ENCODE measurements at regions of chr22 and their contacts with region 1.

Region 1: GRCh38 chr22:36239401-36240171 is at the start of gene APOL2:
- DNase-seq: peak; percentile 75
- ATAC-seq: peak; percentile 98
- H3K4me3 ChIP-seq: peak within 1 kb of the TSS; percentile 96
- H3K27ac ChIP-seq: peak within 1 kb of the TSS; percentile 79
- H3K4me1 ChIP-seq: peaks cover 23% of the 10 kb centered on the region
- H3K27me3 ChIP-seq: no peaks in the 10 kb centered on the region
- CTCF ChIP-seq: peak; percentile 77
- EP300 ChIP-seq: no peak; a peak in 1 of 4 replicates
- POLR2A ChIP-seq: peak; percentile 69
- RAD21 ChIP-seq: peak; percentile 47
- polyA plus RNA-seq, gene APOL2: 4.4 to 14.7 TPM

Region 2: DNA sequence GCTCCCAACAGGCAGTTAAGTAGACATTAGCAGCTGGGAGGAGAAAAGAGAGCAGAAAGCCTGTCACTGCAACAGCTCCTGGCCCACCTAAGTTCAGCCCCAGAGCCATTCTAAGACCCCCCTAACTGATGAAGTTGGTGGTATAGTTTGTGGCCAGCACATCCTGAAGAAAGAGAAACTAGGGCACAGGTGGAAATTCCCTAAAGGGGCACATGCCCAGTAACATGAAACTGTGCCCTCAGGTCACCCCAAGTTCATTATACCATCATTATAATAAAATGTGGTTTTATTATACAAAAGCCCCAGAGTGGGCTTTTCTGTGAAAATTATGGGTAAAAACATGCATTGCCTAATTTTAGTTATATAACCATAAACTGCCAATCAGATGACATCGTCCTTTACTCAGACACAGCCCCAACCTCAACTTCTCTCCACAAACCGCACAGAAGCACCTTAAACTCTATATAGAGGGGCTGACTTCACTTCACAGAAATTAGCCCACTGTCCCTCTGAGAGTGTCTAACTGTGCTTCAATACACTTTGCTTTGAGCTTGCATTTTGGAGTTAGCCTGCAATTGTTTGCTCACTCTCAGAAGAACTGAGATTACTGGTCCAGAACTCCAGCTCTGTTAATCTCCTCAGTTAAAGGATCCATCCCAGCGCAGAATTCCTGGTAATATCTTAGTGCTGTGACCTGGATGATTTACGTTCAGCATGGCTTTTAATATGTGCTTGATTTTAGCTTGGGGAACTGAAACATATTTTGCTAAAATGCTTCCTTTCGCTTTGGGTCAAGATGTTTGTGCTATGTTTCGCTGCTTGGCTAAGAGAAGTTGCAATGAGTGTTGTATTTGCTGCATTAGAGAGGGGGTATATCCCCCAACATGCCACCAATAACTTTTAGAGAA is 77.2 kb before region 1 on chr22:
- CTCF ChIA-PET with region 1: interaction called, 8 read pairs
- POLR2A ChIA-PET with region 1: no interaction called
- RAD21 ChIA-PET with region 1: interaction called, 18 read pairs
- SMC1A ChIA-PET with region 1: interaction called, 10 read pairs
- in situ Hi-C with region 1: no loop called
- intact Hi-C with region 1: no loop called
- DNase-seq: peak; percentile 70
- ATAC-seq: peak; percentile 79
- H3K4me3 ChIP-seq: peak overlapping the region; percentile 55
- H3K27ac ChIP-seq: peak overlapping the region; percentile 94
- H3K4me1 ChIP-seq: peaks cover 58% of the 10 kb centered on the region
- H3K27me3 ChIP-seq: no peaks in the 10 kb centered on the region
- CTCF ChIP-seq: no peak
- EP300 ChIP-seq: peak; percentile 13 to 37; a peak in 3 of 4 replicates
- POLR2A ChIP-seq: no peak
- RAD21 ChIP-seq: no peak

Region 3: DNA sequence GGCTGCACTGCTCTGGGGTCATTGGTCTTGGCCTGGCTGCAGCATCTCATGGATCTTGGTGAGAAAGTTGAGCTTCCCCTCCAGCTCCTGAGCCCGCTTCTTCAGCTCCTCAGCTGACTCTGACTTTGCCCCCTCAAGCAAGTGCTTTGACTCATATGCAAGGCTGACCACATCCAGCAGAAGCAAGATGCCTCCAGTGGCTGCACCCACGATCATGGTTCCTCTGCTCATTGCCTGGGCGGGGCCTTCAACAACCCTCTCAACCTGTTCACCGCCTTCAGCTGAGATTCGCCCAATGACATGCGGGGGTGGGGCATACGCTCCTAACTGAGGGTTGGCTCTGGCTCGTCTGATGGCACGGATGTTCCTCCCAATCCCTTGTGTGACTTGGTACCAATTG is 12.2 kb before region 1 on chr22:
- CTCF ChIA-PET with region 1: interaction called, 8 read pairs
- POLR2A ChIA-PET with region 1: interaction called, 3 read pairs
- RAD21 ChIA-PET with region 1: no interaction called
- SMC1A ChIA-PET with region 1: interaction called, 12 read pairs
- in situ Hi-C with region 1: no loop called
- intact Hi-C with region 1: no loop called
- DNase-seq: no peak
- ATAC-seq: no peak
- H3K4me3 ChIP-seq: no peak overlapping the region
- H3K27ac ChIP-seq: no peak overlapping the region
- H3K4me1 ChIP-seq: no peaks in the 10 kb centered on the region
- H3K27me3 ChIP-seq: no peaks in the 10 kb centered on the region
- CTCF ChIP-seq: no peak
- EP300 ChIP-seq: no peak
- POLR2A ChIP-seq: no peak
- RAD21 ChIP-seq: no peak

Region 4: DNA sequence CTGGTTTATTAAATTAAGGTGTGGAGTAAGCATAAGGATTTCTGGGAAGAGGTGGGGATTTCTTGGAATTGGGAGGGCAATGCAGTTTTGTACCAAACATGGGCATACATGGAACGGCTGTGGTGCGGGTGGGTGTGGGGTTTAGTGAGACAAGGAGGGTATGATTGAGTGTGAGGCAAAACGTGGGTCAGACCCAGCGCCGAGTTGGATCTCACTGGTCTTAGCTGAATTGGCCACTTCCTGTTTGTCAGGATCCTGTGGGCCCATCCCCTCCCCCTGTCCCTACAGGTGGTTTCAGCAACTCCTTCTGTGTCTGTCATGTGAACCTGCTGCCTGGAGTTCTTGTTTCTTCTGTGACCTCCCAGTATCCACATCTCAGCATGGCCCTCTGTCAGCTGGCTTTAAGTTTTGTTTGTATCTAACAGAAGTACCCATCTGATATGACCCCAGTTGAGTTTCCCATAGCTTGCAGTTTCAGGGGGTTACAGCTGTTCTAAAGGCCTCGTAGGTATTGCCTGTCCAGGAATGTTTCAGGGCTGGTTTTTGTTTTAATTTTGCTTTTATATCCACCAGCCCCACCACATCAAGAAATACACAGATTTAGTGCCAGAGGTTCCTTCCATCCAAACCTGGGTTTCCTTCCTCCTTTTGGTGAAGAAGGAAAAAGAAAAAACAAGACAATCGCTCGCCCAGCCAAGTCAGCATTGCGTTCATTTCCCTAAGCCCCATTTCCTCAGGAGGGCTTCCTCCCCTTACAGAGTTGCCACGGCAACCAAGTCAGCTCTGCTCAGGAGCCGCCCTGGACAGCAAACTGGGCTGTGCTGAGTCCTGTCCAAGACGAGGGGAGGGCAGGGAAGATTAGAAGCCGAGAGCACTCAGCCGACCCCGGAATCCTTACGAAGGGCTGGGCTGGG is 19.4 kb after region 1 on chr22:
- CTCF ChIA-PET with region 1: interaction called, 153 read pairs
- POLR2A ChIA-PET with region 1: interaction called, 99 read pairs
- RAD21 ChIA-PET with region 1: interaction called, 100 read pairs
- SMC1A ChIA-PET with region 1: interaction called, 165 read pairs
- in situ Hi-C with region 1: no loop called
- intact Hi-C with region 1: no loop called
- DNase-seq: no peak
- ATAC-seq: peak; percentile 85
- H3K4me3 ChIP-seq: peak overlapping the region; percentile 41; the same call in 1 of the 2 replicates
- H3K27ac ChIP-seq: peak overlapping the region; percentile 72
- H3K4me1 ChIP-seq: peaks cover 23% of the 10 kb centered on the region
- H3K27me3 ChIP-seq: no peaks in the 10 kb centered on the region
- CTCF ChIP-seq: no peak
- EP300 ChIP-seq: no peak
- POLR2A ChIP-seq: 0 out of 2 replicates have a peak, but pooled peaks have one; percentile 22
- RAD21 ChIP-seq: no peak

Region 5: DNA sequence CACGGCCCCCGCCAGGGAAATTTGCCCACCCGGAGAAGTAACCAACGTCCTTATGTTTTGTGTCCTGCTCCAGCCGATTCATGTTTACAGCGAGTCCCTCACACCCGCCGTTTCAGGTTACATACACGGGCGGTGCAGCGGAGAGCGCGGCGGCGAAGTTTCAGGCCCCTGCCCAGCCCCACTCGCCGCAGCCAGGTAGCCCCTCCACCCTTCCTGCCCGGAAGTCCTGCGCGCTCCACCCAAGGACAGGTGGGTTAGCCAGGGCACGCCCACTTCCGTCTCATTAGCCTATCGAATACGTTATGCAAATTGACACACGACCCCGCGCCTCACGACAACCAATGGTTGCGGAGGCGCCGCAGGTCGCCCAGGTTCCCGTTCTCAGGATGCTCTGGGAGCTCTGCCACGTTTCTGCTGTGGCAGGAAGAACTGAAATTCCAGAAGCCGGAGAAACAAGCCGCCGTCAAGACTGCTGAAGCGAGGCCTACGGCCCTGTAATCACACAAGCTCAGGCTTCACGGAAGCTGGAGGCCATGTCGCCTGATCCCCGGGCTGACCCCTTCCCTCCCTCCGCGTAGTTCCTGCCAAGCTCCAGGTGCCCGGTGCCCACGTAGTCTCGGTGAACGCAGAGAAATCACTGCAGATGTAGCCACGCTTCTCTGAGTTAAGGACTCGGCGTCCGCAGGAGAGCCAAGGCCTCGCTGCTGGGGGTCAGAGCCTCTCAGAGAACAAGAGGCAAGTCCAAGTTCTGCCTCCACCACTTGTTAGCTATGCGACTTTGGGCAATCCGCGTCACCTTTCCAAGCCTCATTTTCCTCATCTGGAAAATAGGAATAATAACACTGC is 170.5 kb after region 1 on chr22:
- CTCF ChIA-PET with region 1: no interaction called
- POLR2A ChIA-PET with region 1: no interaction called
- RAD21 ChIA-PET with region 1: no interaction called
- SMC1A ChIA-PET with region 1: no interaction called
- in situ Hi-C with region 1: no loop called
- intact Hi-C with region 1: no loop called
- DNase-seq: no peak
- ATAC-seq: peak; percentile 84
- H3K4me3 ChIP-seq: peak overlapping the region; percentile 37; the same call in 1 of the 2 replicates
- H3K27ac ChIP-seq: peak overlapping the region; percentile 13; the same call in 1 of the 2 replicates
- H3K4me1 ChIP-seq: peaks cover 11% of the 10 kb centered on the region
- H3K27me3 ChIP-seq: no peaks in the 10 kb centered on the region
- CTCF ChIP-seq: no peak
- EP300 ChIP-seq: no peak
- POLR2A ChIP-seq: peak; percentile 81
- RAD21 ChIP-seq: no peak